ENCODE measurements at regions of chr17 and their contacts with region 1.

Region 1: GRCh38 chr17:46044286-46044928 is 45.4 kb downstream of the STH start:
- DNase-seq: peak in 4 of 5 donors; percentile 73 to 77 (median 75)
- ATAC-seq: peak; percentile 33 to 86 (median 82)
- H3K4me3 ChIP-seq: peak overlapping the region in 1 of 12 donors; percentile 8
- H3K27ac ChIP-seq: peak overlapping the region in 8 of 12 donors; percentile 3 to 58 (median 24)
- H3K4me1 ChIP-seq: peaks cover 0 to 41% (median 21%) of the 10 kb centered on the region in 12 donors
- H3K27me3 ChIP-seq: no peaks in the 10 kb centered on the region
- CTCF ChIP-seq: peak; percentile 75 to 95 (median 86)
- POLR2A ChIP-seq: no peak

Region 2: DNA sequence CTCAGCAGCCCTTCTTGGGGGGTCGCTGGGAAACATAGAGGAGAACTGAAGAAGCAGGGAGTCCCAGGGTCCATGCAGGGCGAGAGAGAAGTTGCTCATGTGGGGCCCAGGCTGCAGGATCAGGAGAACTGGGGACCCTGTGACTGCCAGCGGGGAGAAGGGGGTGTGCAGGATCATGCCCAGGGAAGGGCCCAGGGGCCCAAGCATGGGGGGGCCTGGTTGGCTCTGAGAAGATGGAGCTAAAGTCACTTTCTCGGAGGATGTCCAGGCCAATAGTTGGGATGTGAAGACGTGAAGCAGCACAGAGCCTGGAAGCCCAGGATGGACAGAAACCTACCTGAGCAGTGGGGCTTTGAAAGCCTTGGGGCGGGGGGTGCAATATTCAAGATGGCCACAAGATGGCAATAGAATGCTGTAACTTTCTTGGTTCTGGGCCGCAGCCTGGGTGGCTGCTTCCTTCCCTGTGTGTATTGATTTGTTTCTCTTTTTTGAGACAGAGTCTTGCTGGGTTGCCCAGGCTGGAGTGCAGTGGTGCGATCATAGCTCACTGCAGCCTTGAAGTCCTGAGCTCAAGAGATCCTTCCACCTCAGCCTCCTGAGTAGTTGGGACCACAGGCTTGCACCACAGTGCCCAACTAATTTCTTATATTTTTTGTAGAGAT is 42.0 kb before region 1 on chr17:
- intact Hi-C with region 1: loop called in 2 of 10 experiments (anchors 5 kb)
- DNase-seq: peak in 4 of 5 donors; percentile 54 to 65 (median 57)
- ATAC-seq: peak; percentile 60 to 85 (median 81)
- H3K4me3 ChIP-seq: no peak overlapping the region
- H3K27ac ChIP-seq: no peak overlapping the region
- H3K4me1 ChIP-seq: peaks cover 0 to 17% (median 0%) of the 10 kb centered on the region in 12 donors
- H3K27me3 ChIP-seq: no peaks in the 10 kb centered on the region
- CTCF ChIP-seq: peak; percentile 89 to 97 (median 94)
- POLR2A ChIP-seq: no peak

Region 3: GRCh38 chr17:46182961-46183360 is 138.6 kb after region 1 on chr17:
- intact Hi-C with region 1: loop called in 1 of 10 experiments (anchors 2 kb)
- DNase-seq: no peak
- ATAC-seq: no peak
- H3K4me3 ChIP-seq: no peak overlapping the region
- H3K27ac ChIP-seq: no peak overlapping the region
- H3K4me1 ChIP-seq: peaks cover 0 to 95% (median 88%) of the 10 kb centered on the region in 12 donors
- H3K27me3 ChIP-seq: no peaks in the 10 kb centered on the region
- CTCF ChIP-seq: no peak
- POLR2A ChIP-seq: no peak

Region 4: DNA sequence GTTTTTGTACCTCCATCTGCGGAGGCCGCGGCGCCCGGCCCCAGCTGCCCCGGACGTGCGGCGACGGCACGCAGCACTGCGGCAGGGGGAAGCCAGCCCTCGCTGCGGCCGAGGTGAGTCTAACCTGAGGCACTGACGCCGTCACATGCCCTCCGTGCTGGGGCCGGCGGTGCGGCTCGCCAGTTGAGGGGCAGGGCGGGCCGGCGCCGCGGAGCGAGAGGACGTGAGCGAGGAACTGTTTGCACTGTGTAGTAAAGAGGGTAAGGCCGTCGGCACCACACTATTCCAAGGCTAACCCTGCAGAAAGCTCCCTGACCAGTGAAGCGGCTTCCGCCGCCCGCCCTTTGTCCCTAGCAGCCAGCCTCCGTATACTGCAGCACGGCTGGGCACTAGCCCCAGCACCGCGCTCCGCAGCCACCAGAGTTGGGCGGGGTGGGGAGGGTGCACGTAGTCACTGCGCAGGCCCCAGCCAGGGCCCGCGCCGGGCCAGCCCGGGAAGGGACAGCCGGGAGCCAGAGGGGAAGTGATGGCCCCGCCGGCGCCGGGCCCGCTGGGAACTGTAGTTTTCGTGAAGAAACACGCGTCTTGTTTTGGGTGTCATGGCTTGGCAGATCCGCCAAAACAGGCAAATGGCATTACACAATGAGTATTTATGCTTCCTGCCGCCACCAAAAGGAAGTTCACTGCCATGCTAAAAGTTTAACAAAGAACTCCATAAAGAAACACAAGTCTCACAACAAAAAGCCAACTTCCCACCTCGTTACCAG is 149.4 kb after region 1 on chr17:
- intact Hi-C with region 1: loop called in 9 of 10 experiments (anchors 1 to 5 kb)
- DNase-seq: peak; percentile 95 to 99 (median 98)
- ATAC-seq: peak; percentile 90 to 97 (median 95)
- H3K4me3 ChIP-seq: peak overlapping the region; percentile 70 to 100 (median 88)
- H3K27ac ChIP-seq: peak overlapping the region; percentile 98 to 100 (median 99)
- H3K4me1 ChIP-seq: peaks cover 0 to 49% (median 35%) of the 10 kb centered on the region in 12 donors
- H3K27me3 ChIP-seq: no peaks in the 10 kb centered on the region
- CTCF ChIP-seq: peak in 7 of 12 donors; percentile 7 to 54 (median 36)
- POLR2A ChIP-seq: peak in 1 of 2 donors; percentile 82

Measured in heart left ventricle (tissue), 16 donors.